Activated T-helper 1 cell treated with anti-CD3 and anti-CD28 coated beads, Interleukin-12 subunit alpha, Interleukin-12 subunit beta, Interleukin-2, Interleukin-4 antibody, amounts not matched to agents 30 ng/mL and 10 ng/mL and 1 ng/mL, durations not matched to agents 14 hours and 24 hours and 36 hours (primary cell): ENCODE measurements at regions of chr7 and their contacts with region 1.

Region 1: GRCh38 chr7:129298268-129298893 is 73.6 kb downstream of the AHCYL2 start:
- DNase-seq: peak; percentile 13
- H3K4me3 Mint-ChIP-seq: no peak overlapping the region
- H3K27ac Mint-ChIP-seq: no peak overlapping the region
- H3K4me1 Mint-ChIP-seq: no peaks in the 10 kb centered on the region
- H3K27me3 Mint-ChIP-seq: peaks cover 3% of the 10 kb centered on the region

Region 2: DNA sequence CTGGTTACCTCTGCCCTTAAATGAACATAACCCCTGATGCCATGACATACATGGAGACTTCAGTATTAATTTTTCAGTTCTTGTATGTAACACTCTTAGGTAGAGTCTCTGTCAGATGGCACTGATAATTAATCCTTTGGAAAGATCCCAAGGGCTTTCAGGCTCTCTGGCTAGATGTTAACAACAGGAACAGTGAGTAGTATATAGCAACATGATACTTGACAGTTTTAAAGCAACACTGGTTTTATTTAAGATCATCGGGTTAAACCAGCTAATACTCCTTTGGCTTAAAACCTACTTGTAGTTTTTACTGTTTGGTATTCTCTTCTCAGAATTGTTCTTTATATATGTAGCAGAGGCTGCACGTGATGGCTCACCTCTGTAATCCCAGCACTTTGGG is 46.3 kb before region 1 on chr7:
- intact Hi-C with region 1: no loop called
- DNase-seq: no peak
- H3K4me3 Mint-ChIP-seq: no peak overlapping the region
- H3K27ac Mint-ChIP-seq: no peak overlapping the region
- H3K4me1 Mint-ChIP-seq: no peaks in the 10 kb centered on the region
- H3K27me3 Mint-ChIP-seq: no peaks in the 10 kb centered on the region

Region 3: DNA sequence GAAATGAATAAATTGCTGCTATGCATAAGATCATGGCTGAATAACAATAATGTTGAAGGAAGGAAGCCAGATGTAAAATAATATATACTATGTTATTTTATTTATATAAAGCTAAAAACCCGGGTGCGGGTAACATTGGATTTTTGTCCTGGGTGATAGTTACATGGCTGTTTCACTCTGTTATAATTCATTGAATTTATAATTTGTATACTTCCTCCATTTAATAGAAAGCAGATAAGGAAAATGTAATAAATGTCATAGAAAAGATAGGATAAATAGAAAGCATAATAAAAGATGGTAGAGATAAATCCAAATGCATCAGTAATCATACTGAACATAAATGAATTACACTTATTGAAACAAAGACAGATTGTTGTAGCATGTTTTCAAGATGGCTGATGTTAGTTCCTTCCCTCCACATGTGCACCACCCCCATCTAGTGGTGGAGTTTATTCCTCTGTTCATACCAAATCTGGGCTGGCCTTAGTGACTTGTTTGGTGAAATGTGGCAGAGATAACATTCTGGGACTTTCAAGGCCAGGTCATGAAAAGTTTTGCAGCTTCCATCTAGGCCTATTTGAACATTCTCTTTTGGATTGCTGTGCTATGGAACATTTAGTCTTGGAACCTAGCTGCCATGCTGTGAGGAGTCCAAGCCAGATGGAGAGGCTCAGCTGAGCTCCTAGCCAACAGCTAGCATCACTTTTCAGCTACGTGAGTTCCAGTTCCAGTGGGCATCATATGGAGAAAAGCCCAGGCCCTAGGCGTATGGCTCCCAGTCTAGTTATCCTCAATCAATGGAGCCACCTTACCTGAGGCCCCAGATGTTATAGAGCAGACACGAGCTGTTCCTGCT is 26.7 kb before region 1 on chr7:
- intact Hi-C with region 1: loop called (anchors 1 kb)
- DNase-seq: peak; percentile 58
- H3K4me3 Mint-ChIP-seq: no peak overlapping the region
- H3K27ac Mint-ChIP-seq: no peak overlapping the region
- H3K4me1 Mint-ChIP-seq: peaks cover 9% of the 10 kb centered on the region
- H3K27me3 Mint-ChIP-seq: no peaks in the 10 kb centered on the region